PC-3 (cell line): ENCODE measurements at regions of chr1 and their contacts with region 1.

Region 1: DNA sequence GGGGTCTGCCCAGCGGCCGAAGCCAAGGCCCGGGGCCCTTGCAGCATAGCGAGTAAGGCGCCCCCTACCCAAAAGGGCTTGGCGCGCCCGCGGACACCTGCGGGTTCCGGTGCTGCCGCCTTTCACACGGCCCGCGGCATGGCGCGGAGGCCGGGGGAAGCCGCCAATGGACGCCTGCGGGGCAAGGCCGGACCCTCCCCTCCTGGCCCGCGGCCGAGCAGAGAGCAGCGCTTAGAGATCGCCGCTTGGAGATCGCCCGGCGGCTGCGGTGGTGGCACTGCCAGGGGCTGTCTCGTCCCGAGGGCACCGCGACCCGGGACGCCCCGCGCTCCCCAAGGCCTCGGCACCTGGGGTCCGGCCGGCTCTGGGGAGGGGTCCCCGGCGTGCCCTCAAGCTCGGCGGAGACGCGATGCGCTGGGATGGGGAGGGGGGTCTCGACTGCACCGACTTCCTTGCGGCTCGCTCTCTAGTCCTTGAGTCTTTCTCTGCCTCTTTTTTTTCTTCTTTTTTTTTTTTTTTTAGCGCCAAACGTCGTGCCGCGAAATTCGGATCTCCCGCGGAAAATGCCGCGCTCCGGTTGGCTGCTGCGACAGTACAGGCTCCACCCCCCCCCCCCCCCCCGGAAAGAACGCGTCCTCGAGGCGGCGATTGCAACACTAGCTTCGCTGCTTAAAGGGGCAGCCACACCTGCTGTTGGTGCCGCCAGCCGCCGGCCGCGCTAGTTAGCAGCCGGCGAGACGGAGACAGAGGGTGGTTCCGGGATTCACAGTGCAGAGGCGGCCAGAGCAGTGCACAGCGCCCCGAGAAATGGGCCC is at the start of gene E2F2:
- DNase-seq: peak; percentile 81
- ATAC-seq: peak; percentile 68
- H3K4me3 ChIP-seq: peak within 1 kb of the TSS; percentile 71
- H3K27ac ChIP-seq: peak within 1 kb of the TSS; percentile 29; the same call in 1 of the 2 replicates
- H3K4me1 ChIP-seq: peaks cover 48% of the 10 kb centered on the region
- H3K27me3 ChIP-seq: no peaks in the 10 kb centered on the region
- CTCF ChIP-seq: peak; percentile 30; the same call in 1 of the 2 replicates
- total RNA-seq, gene E2F2: 7.0 and 8.3 TPM in 2 replicates

Region 2: DNA sequence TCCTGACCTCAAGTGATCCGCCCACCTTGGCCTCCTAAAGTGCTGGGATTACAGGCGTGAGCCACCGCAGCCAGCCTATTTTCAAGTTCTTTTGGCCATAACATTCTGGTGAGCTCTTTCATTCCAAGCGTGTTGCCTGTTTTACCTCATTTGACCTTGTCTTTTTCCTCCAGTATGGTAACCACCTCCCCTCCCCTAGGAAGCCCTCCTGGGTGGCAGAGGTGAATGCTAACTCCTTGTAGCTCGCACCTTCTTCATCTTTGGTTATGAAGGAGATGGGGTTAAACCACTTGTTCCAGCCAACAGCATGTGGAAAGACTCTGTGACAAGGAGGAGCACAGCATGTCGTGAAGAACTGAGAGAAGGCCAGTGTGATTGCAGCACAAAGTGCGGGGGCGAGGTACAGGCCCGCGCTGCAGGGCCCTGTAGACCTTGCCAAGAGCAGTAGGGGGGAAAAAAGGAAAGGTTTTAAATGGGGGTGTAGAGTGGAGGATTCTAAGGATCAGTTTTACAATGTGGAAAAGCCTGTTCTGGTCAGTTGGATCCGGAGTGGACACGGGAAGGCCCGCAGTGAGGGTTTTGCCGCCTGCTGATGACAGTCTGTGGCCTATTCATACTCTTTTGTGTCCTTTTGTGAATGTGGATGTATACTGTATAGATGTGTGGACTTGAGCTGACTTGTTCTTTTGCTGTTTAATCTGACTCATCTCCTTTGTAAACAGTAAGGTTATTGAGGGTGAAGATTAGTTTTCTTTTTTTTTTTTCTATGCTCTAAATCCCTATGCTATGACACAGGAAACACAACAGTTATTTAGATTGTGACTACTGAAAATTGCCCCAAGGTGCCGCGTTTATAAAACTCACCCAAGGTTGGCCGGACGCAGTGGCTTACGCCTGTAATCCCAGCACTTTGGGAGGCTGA is 153.8 kb before region 1 on chr1:
- CTCF ChIA-PET with region 1: interaction called, 10 read pairs
- POLR2A ChIA-PET with region 1: no interaction called
- intact Hi-C with region 1: no loop called
- DNase-seq: peak; percentile 89
- ATAC-seq: peak; percentile 96
- H3K4me3 ChIP-seq: no peak overlapping the region
- H3K27ac ChIP-seq: peak overlapping the region; percentile 84
- H3K4me1 ChIP-seq: peaks cover 9% of the 10 kb centered on the region
- H3K27me3 ChIP-seq: no peaks in the 10 kb centered on the region
- CTCF ChIP-seq: no peak

Region 3: GRCh38 chr1:23470282-23471071 is 60.5 kb before region 1 on chr1:
- CTCF ChIA-PET with region 1: no interaction called
- POLR2A ChIA-PET with region 1: no interaction called
- intact Hi-C with region 1: no loop called
- DNase-seq: no peak
- ATAC-seq: no peak
- H3K4me3 ChIP-seq: no peak overlapping the region
- H3K27ac ChIP-seq: no peak overlapping the region
- H3K4me1 ChIP-seq: peaks cover 16% of the 10 kb centered on the region
- H3K27me3 ChIP-seq: no peaks in the 10 kb centered on the region
- CTCF ChIP-seq: no peak

Region 4: DNA sequence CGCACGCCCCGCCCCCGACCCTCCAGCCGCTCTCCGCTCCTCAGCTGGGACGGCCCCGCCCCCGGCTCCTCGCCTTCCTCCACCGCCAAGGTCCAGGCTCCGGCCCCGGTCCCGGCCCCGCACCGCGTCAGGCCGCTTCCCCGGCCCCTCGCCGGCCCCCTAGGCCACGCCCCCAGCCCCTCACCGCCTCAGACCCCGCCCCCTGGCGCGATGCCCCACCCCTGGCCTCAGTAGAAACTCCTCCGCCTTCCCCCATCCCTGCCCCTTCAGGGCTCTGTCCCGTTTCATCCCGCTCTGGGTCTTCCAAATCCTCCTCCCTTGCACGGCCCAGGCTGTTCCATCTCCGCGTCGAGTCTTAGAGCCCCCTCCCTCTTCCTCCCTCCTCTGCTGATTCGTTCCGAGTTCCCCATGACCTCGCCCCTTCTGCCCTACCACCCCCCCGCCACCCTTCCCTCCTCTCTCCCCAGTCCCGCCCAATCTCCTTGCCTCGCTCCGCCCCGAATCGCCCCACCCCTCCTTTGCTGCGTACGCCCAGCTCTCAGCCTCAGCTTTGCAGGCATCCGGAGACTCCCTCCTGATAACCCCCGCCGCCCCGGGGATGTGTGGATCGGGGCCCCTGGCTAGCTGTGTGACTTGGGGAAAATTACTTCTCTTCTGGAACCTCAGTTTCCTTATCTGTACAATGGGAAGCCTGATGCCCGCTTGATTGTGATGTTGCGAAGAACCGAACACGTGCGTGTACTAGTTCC is 46.5 kb before region 1 on chr1:
- CTCF ChIA-PET with region 1: no interaction called
- POLR2A ChIA-PET with region 1: interaction called, 19 read pairs
- intact Hi-C with region 1: no loop called
- DNase-seq: peak; percentile 82
- ATAC-seq: peak; percentile 91
- H3K4me3 ChIP-seq: peak overlapping the region; percentile 76
- H3K27ac ChIP-seq: no peak overlapping the region
- H3K4me1 ChIP-seq: peaks cover 12% of the 10 kb centered on the region
- H3K27me3 ChIP-seq: no peaks in the 10 kb centered on the region
- CTCF ChIP-seq: no peak